ENCODE measurements at regions of chr12 and their contacts with region 1.

Region 1: DNA sequence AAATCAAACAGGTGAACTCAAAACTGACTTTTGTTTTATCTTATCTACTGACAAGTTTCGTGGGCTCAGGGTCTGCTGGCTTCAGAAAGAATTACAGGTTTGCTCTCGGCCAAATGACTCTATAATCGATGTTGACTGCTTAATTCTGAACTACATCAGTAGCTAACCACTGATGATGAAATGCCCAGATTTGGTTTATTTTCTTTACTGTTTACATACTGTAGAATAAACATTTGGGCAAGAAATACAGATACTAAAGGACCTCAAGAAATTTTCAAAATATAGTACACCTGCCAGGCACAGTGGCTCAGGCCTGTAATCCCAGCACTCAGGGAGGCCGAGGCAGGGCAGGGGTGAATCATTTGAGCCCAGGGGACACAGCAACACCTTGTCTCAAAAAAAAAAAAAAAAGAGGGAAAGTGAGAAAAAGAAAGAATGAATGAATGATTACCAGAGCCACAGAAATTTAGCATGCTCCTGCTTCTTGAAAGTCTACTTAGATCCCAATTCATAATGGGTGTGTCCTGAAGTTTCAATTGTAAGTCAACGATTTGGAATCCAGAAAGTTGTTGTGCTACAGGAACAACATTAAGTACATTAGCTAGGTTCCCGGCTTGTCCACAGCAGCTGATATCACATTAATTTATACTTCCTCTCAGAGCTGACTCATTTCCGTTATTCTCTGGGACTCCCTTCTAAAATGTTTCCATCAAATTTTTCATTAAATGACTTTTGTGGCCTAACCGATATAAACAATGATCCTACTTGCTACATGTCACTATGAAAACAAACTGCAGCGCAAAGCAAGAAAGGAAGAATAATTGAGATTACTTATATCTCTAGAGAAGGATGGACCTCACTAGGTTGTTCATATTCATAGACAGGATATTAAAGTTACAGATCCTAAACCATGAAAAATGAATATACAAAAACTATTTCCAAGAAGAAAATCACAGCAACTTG is 134.3 kb downstream of the MED13L start:
- DNase-seq: no peak
- H3K4me3 Mint-ChIP-seq: no peak overlapping the region
- H3K27ac Mint-ChIP-seq: peak overlapping the region; percentile 13
- H3K4me1 Mint-ChIP-seq: peaks cover 55% of the 10 kb centered on the region
- H3K27me3 Mint-ChIP-seq: no peaks in the 10 kb centered on the region

Region 2: GRCh38 chr12:116060764-116061163 is 82.5 kb before region 1 on chr12:
- CTCF ChIA-PET with region 1: interaction called, 3 read pairs
- intact Hi-C with region 1: loop called (anchors 2 kb)
- DNase-seq: no peak
- H3K4me3 Mint-ChIP-seq: peak overlapping the region; percentile 56
- H3K27ac Mint-ChIP-seq: peak overlapping the region; percentile 81
- H3K4me1 Mint-ChIP-seq: peaks cover 52% of the 10 kb centered on the region
- H3K27me3 Mint-ChIP-seq: no peaks in the 10 kb centered on the region

Region 3: DNA sequence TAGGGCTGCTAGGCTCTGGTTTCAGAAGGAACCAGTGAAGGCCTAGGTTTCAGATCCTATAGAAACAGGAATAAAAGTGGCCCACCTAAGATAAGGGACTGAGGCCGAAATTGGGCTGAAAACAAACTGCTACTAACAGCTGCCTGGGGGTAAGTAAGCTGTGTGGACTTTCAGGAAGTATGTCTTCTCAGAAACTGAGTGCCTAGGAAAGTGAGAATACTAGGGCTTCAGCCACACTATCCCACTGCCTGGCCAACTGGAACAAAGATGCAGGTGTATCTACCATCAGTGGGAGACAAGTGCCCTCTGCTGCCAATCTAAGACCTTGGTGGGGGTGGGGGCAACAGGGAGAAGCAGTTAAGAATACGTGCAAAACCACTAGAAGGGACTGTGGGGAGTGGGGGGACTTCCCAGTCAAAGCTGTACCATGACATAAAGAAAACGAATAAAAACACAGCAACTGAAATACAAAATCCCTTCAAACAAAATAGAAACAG is 51.8 kb after region 1 on chr12:
- CTCF ChIA-PET with region 1: interaction called, 12 read pairs
- intact Hi-C with region 1: loop called (anchors 1 kb)
- DNase-seq: peak; percentile 87
- H3K4me3 Mint-ChIP-seq: no peak overlapping the region
- H3K27ac Mint-ChIP-seq: no peak overlapping the region
- H3K4me1 Mint-ChIP-seq: peaks cover 53% of the 10 kb centered on the region
- H3K27me3 Mint-ChIP-seq: no peaks in the 10 kb centered on the region

Region 4: DNA sequence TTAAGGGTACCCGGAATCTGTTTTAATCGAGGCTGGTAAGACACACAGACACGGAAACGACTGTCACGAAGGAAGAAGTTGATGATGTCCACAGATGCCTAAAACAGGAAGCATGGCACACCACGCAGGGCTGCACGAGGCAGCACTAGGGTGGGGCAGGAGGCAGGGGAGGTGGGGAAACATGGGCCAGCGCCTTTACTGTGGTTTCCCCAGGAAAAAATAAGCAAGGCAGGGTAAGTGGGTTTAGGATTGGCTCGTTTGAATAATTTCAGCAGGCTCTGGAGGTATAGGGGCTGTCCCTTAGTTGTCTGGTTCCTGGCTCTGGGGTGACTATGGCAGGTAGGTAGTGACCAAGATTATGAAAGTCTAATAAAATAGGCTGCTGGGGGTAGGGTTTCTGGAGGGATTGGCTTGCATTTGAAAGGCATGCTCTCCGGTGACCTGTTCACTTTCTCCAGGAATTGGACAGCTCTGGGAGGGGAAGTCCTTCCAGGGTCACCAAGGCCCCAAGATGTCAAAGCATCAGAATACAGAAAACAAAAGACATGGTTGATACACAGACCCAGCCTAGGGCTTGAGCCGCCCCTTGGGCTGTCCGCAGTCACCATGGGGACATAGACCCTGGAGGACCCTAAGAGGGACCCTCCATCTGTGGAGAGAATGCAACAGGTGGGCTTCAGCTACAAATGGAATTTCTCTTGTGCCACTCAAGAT is 451.3 kb after region 1 on chr12:
- CTCF ChIA-PET with region 1: interaction called, 13 read pairs
- intact Hi-C with region 1: loop called (anchors 1 kb)
- DNase-seq: peak; percentile 76
- H3K4me3 Mint-ChIP-seq: no peak overlapping the region
- H3K27ac Mint-ChIP-seq: no peak overlapping the region
- H3K4me1 Mint-ChIP-seq: peaks cover 22% of the 10 kb centered on the region
- H3K27me3 Mint-ChIP-seq: no peaks in the 10 kb centered on the region

Region 5: DNA sequence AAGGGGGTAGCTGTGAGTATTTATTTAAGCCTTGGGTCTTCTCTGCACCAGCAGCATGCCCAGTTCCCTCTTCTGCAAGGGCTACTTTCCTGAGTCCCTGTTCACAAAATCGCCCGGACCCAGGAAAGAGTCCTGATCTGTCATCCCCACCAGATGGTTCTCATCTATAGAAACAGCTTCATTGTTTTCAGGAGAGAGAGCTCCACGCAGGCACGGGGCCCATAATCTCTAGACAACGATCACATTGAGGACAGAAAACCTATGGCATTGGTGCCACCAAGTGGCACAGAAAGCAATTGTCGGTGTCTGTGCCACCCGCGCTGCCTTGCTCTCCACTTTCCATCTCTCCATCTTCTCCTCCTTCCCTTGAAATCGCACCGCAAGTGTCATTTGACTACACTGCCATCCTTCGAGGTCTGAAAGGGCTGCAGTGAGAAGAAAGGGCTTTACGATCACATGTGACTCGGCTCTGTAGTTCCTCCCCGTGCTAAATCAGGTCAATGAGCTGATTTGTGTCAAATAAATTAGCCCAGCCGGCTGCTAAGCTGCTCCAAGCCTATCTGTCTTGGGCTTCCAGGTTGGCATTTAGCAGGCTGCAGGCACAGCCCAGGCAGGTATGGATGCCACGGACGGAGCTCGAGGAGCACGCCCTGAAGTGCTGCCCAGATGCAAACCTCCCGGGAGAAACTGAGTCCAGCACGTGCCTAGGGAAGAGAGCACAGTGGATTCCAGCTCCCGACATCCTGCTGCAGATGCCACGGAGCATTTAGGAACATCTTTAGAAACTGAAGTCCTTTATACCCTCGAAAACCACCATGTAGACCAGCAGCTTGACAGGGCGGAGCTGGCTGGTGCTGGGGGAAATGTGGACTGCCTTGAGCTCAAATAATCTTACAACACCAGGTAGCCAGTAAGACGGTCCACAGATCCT is 565.9 kb after region 1 on chr12:
- CTCF ChIA-PET with region 1: interaction called, 5 read pairs
- intact Hi-C with region 1: loop called (anchors 5 kb)
- DNase-seq: peak; percentile 71
- H3K4me3 Mint-ChIP-seq: peak overlapping the region; percentile 63
- H3K27ac Mint-ChIP-seq: no peak overlapping the region
- H3K4me1 Mint-ChIP-seq: peaks cover 8% of the 10 kb centered on the region
- H3K27me3 Mint-ChIP-seq: peaks cover 6% of the 10 kb centered on the region

Measured in activated naive CD4-positive, alpha-beta T cell treated with anti-CD3 and anti-CD28 coated beads for 36 hours (primary cell).